Left cardiac atrium (tissue), 4 donors: ENCODE measurements at regions of chr15 and their contacts with region 1.

Region 1: DNA sequence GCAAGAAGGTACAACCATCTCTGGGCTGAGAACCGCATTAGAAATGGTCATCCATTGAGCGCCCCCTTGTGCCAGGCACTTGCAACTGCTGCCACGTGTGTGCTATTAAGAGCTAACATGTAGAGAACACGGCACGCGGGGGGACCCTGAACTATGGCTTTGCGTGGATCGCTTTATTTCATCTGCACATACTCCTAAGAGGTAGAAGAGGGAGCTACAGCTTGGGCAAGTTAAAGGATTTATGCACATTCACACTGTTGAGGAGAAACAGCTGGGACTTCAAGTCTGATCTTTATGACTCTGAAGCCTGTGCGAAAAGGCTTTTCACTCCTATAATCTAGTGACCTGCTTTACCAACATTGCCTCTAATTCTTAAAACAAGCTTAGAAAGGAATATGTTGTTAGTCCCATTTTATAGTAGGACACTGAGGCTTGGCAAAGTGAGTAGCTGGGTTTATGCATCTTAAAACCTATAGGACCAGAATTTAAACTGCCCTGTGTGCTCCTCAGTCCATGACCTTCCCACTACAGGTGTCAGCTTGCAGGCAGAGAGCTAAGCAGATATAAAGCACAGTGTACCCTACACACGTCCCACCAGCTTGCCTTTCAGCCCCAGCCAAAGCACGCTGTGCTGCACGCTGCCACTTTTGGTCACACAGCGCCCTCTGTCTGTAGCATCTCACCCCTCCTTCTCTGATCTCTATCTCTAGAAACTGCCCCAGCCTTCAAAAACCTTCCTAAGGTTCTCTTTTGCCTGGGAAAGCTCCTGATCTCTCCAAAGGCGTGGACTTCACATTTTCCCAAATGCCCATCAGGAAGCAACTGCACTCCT is 57.8 kb downstream of the STARD5 start:
- DNase-seq: peak; percentile 85
- ATAC-seq: peak; percentile 95 to 96

Region 2: DNA sequence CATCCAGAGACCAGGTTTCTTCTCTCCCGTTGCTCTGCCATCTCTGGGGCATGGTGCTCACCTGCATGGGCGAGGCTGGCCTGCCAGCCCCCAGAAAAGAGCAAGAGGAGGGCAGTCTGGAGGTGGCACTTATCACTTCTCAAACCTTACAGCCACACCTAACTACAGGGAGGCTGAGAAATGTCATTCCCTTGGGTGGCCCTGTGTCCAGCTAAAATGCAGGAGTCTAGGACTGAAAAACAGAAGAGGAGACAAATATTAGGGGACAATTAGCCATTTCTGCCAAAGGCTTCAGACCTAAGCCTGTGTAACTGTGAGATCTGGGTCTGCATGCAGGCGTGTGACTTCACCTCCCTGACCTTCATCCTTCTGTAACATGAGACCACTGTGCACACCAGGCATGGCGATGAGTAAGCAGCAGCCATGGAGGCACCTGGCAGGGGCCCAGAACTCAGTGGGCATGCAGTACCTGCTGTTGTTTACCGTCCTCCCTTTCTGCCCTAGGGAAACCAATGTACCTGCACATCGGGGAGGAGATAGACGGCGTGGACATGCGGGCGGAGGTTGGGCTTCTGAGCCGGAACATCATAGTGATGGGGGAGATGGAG is 359.9 kb before region 1 on chr15:
- intact Hi-C with region 1: no loop called
- DNase-seq: no peak
- ATAC-seq: peak in 1 of 2 donors; percentile 18

Region 3: GRCh38 chr15:80977627-80978036 is 288.5 kb before region 1 on chr15:
- intact Hi-C with region 1: loop called in 1 of 2 experiments (anchors 5 kb)
- DNase-seq: peak; percentile 72
- ATAC-seq: peak; percentile 65 to 71

Region 4: GRCh38 chr15:81106560-81106959 is 159.6 kb before region 1 on chr15:
- intact Hi-C with region 1: loop called (anchors 1 to 5 kb)
- DNase-seq: peak; percentile 37
- ATAC-seq: peak; percentile 38 to 87

Region 5: GRCh38 chr15:81155375-81156218 is 110.6 kb before region 1 on chr15:
- intact Hi-C with region 1: loop called (anchors 1 to 5 kb)
- DNase-seq: no peak
- ATAC-seq: peak; percentile 35 to 56

Region 6: DNA sequence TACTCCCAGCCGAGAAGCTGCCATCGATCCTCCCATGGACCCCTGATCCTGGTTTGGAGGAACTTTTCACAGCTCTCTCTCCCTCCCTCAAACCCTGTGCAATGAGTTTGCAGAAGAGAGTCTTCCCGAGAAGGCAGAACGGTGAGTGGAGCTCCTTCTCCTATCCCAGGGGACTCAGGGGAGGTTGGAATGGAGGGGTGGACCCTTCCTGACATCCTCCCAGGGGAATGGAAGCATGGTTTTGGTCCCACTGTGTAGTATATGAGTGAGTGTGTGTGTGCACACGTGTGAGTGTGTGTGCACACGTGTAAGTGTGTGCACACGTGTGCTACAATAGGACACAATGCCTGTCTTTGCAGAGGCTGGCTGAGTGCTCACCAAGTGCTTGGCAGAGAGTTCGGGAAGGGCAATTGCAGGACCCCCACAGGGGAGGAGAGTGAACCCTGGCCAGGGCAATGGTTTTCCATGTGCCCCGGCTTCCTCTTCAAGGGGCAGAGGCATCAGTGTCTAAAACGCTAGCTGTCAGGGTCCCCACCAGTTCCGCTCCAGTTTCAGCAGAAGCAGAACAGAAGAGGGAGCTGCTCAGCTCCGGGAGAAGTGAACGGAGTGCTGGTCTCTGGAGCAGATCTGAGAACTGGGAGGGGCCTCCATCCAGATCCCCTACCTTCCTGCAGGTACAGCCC is 83.3 kb before region 1 on chr15:
- intact Hi-C with region 1: no loop called
- DNase-seq: no peak
- ATAC-seq: peak; percentile 70 to 77

Region 7: DNA sequence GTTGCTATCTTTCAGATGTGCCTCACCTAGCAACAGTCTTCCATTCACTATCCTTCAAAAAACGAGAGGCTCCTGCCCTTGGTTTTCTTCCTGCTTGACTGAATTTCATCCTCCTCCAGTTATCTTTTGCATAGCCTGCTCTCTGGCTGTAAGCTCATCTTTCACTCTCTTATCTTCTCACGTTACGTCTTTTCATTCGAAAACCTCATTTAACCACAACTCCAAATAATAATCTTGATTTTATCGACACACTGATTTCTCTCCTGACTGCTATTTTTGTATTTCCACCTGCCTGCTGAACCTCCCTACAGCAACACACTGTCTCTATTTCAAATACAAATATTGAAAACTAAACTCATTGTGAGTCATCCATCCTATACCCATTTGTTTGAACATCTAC is 338.6 kb after region 1 on chr15:
- intact Hi-C with region 1: no loop called
- DNase-seq: no peak
- ATAC-seq: no peak